Heart right ventricle (tissue), 16 donors: ENCODE measurements at regions of chr3 and their contacts with region 1.

Region 1: DNA sequence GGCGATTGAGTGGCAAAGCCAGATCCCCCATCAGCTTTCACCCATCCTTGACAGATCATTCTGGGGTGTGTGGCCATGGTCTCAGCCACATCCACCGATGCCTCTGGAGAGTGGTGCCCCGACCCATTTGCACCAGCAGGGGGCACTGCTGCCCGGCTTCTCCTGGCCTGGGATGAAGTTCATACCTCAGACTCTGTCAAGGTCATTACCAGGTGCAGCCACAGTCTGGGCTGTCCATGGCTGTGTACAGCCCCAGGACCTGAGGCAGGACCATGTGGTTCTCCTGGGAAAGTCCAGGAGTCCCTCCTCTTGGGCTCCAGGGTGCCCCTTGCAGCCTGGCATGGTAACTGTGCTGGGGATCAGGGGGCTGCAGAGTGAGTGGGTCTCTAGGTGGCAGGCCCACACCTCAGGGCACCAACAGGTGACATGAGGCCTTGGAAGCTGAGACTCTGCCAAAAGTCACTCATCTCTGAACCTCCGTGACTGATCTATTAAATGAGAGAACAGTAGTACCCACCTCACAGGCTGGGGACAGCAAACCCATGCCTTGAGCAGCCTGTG is 67.2 kb downstream of the CACNA2D2 start:
- DNase-seq: peak; percentile 58 to 74
- ATAC-seq: peak; percentile 78 to 90 (median 82)
- H3K4me3 ChIP-seq: no peak overlapping the region
- H3K27ac ChIP-seq: no peak overlapping the region
- H3K4me1 ChIP-seq: peaks cover 0 to 14% (median 0%) of the 10 kb centered on the region in 9 donors
- H3K27me3 ChIP-seq: no peaks in the 10 kb centered on the region
- CTCF ChIP-seq: peak; percentile 81 to 94 (median 86)

Region 2: GRCh38 chr3:50245831-50246516 is 190.2 kb before region 1 on chr3:
- intact Hi-C with region 1: no loop called
- DNase-seq: peak; percentile 93
- ATAC-seq: peak; percentile 77 to 88 (median 82)
- H3K4me3 ChIP-seq: peak overlapping the region; percentile 12 to 57 (median 46)
- H3K27ac ChIP-seq: peak overlapping the region; percentile 83 to 100 (median 94)
- H3K4me1 ChIP-seq: peaks cover 72 to 100% (median 99%) of the 10 kb centered on the region in 9 donors
- H3K27me3 ChIP-seq: no peaks in the 10 kb centered on the region
- CTCF ChIP-seq: peak; percentile 97 to 99 (median 99)

Region 3: GRCh38 chr3:50314342-50314741 is 121.9 kb before region 1 on chr3:
- intact Hi-C with region 1: no loop called
- DNase-seq: no peak
- ATAC-seq: peak in 2 of 8 donors; percentile 4 to 14
- H3K4me3 ChIP-seq: no peak overlapping the region
- H3K27ac ChIP-seq: peak overlapping the region in 2 of 10 donors; percentile 4 to 44
- H3K4me1 ChIP-seq: peaks cover 8 to 39% (median 27%) of the 10 kb centered on the region in 9 donors
- H3K27me3 ChIP-seq: no peaks in the 10 kb centered on the region
- CTCF ChIP-seq: no peak

Region 4: DNA sequence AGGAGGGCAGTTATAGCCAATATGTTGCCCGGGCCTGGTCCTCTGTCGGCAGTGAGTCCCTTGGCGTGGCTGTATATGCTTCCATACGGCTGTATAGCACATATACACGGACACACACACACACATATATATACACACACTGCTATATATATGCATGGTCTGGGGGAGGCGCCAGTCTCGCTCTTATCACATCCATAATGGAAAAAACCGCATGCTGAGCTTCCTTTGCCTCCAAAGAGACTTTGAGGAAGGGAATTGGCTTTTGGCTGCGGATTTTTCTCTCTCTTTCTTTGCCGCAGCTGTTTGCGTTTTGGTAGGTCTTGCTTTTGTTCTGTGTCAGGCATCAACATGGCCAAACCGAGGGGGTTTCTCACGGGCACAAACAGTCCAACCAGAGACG is 65.6 kb before region 1 on chr3:
- intact Hi-C with region 1: no loop called
- DNase-seq: no peak
- ATAC-seq: peak in 1 of 8 donors; percentile 13
- H3K4me3 ChIP-seq: no peak overlapping the region
- H3K27ac ChIP-seq: no peak overlapping the region
- H3K4me1 ChIP-seq: peaks cover 0 to 4% (median 0%) of the 10 kb centered on the region in 9 donors
- H3K27me3 ChIP-seq: peaks cover 0 to 3% (median 0%) of the 10 kb centered on the region in 7 donors
- CTCF ChIP-seq: peak in 2 of 9 donors; percentile 23 to 30

Region 5: GRCh38 chr3:50536471-50537180 is 100.4 kb after region 1 on chr3:
- intact Hi-C with region 1: loop called in 3 of 10 experiments (anchors 2 to 5 kb)
- DNase-seq: no peak
- ATAC-seq: peak in 1 of 8 donors; percentile 12
- H3K4me3 ChIP-seq: no peak overlapping the region
- H3K27ac ChIP-seq: no peak overlapping the region
- H3K4me1 ChIP-seq: no peaks in the 10 kb centered on the region
- H3K27me3 ChIP-seq: peaks cover 0 to 7% (median 0%) of the 10 kb centered on the region in 7 donors
- CTCF ChIP-seq: no peak